Activated CD4-positive, alpha-beta memory T cell treated with anti-CD3 and anti-CD28 coated beads, Interleukin-2, amount 10 ng/mL, durations not matched to agents 7 days and 5 days (primary cell): ENCODE measurements at regions of chr13 and their contacts with region 1.

Region 1: GRCh38 chr13:22569811-22570210 is 611.0 kb upstream of the SGCG start:
- DNase-seq: no peak
- H3K4me3 Mint-ChIP-seq: no peak overlapping the region
- H3K27ac Mint-ChIP-seq: no peak overlapping the region
- H3K4me1 Mint-ChIP-seq: no peaks in the 10 kb centered on the region
- H3K27me3 Mint-ChIP-seq: no peaks in the 10 kb centered on the region

Region 2: DNA sequence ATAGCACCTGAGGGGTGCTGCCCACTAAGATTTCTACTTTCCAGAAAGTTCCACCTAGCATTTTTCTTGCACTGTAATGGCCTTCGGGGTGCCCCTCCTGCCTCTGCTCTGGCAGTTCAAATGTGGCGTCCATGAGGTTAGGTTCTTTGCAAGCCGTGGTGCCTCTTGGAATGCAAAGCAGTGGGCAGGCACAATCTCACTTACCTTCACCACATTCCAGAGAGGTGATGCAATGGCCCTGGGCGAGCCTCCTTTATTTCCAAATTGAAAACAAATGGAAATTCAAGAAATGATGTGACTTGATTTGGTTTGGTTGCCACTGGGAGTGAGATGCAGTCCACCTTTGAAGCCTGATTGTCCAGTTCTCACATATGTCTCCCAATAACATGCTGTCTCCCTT is 852.0 kb before region 1 on chr13:
- CTCF ChIA-PET with region 1: interaction called, 10 read pairs
- POLR2A ChIA-PET with region 1: no interaction called
- DNase-seq: no peak
- H3K4me3 Mint-ChIP-seq: no peak overlapping the region
- H3K27ac Mint-ChIP-seq: no peak overlapping the region
- H3K4me1 Mint-ChIP-seq: no peaks in the 10 kb centered on the region
- H3K27me3 Mint-ChIP-seq: peaks cover 12% of the 10 kb centered on the region